ENCODE measurements at regions of chr3 and their contacts with region 1.

Region 1: GRCh38 chr3:129934234-129935123 is 40.0 kb upstream of the TRH start:
- DNase-seq: no peak
- ATAC-seq: peak; percentile 18 to 49
- H3K4me3 ChIP-seq: peak overlapping the region; percentile 11 to 53 (median 23)
- H3K27ac ChIP-seq: no peak overlapping the region
- H3K4me1 ChIP-seq: peaks cover 0 to 3% of the 10 kb centered on the region in 2 donors
- H3K27me3 ChIP-seq: no peaks in the 10 kb centered on the region
- CTCF ChIP-seq: peak; percentile 70 to 91 (median 87)
- POLR2A ChIP-seq: no peak

Region 2: GRCh38 chr3:129383292-129383860 is 551.1 kb before region 1 on chr3:
- in situ Hi-C with region 1: no loop called
- intact Hi-C with region 1: loop called (anchors 5 kb)
- DNase-seq: peak in 1 of 2 donors; percentile 32
- ATAC-seq: peak; percentile 64 to 81
- H3K4me3 ChIP-seq: no peak overlapping the region
- H3K27ac ChIP-seq: no peak overlapping the region
- H3K4me1 ChIP-seq: peaks cover 4 to 10% of the 10 kb centered on the region in 2 donors
- H3K27me3 ChIP-seq: no peaks in the 10 kb centered on the region
- CTCF ChIP-seq: peak; percentile 41 to 77 (median 63)
- POLR2A ChIP-seq: no peak

Region 3: GRCh38 chr3:129490242-129491045 is 444.0 kb before region 1 on chr3:
- in situ Hi-C with region 1: loop called (anchors 5 to 25 kb)
- intact Hi-C with region 1: loop called (anchors 2 kb)
- DNase-seq: peak; percentile 84 to 86
- ATAC-seq: peak; percentile 64 to 75
- H3K4me3 ChIP-seq: no peak overlapping the region
- H3K27ac ChIP-seq: peak overlapping the region; percentile 71 to 84 (median 78)
- H3K4me1 ChIP-seq: peaks cover 39 to 47% of the 10 kb centered on the region in 2 donors
- H3K27me3 ChIP-seq: no peaks in the 10 kb centered on the region
- CTCF ChIP-seq: peak; percentile 81 to 91 (median 88)
- POLR2A ChIP-seq: no peak

Region 4: DNA sequence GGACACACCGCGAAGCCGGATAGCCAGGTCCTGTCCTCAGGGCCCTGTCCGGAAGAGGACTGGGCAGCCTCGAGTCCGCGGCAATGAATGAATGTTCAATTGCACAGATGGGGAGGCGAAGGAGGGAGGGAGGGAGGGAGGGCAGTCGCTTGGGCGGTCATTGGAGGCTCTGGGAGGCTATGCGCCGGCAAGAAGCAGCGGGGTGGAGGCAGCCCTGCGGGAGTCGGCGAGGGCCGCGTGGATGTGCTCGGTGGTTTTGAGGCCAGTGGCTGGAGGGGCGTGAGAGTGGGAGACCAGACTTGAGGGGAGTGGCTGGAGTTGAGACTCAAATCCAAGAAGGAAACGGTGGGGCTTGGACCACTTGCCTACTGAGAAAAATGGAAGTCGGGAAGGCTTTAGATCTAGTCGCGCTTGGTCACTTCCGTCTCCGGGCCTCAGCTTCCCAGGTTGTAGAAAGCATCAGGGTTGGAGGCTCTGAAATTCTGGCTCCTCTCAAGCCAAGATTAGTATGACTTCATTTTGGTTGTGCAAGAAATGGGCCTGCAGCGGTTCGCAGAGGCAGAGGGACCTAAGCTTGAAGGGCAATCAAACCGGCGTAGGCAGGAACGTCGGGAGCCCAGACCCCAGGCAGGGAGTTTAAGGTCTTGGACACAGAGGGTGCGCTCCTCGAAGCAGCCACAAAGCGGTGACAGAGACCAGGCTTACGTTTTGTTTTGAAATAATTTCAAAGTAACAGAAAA is 306.9 kb before region 1 on chr3:
- in situ Hi-C with region 1: loop called in 2 of 4 experiments (anchors 10 kb)
- intact Hi-C with region 1: loop called (anchors 1 kb)
- DNase-seq: peak; percentile 49 to 71
- ATAC-seq: peak; percentile 57 to 61
- H3K4me3 ChIP-seq: peak overlapping the region; percentile 77 to 97 (median 88)
- H3K27ac ChIP-seq: peak overlapping the region; percentile 95 to 99 (median 97)
- H3K4me1 ChIP-seq: peaks cover 39 to 41% of the 10 kb centered on the region in 2 donors
- H3K27me3 ChIP-seq: no peaks in the 10 kb centered on the region
- CTCF ChIP-seq: peak; percentile 77 to 87 (median 83)
- POLR2A ChIP-seq: no peak

Region 5: DNA sequence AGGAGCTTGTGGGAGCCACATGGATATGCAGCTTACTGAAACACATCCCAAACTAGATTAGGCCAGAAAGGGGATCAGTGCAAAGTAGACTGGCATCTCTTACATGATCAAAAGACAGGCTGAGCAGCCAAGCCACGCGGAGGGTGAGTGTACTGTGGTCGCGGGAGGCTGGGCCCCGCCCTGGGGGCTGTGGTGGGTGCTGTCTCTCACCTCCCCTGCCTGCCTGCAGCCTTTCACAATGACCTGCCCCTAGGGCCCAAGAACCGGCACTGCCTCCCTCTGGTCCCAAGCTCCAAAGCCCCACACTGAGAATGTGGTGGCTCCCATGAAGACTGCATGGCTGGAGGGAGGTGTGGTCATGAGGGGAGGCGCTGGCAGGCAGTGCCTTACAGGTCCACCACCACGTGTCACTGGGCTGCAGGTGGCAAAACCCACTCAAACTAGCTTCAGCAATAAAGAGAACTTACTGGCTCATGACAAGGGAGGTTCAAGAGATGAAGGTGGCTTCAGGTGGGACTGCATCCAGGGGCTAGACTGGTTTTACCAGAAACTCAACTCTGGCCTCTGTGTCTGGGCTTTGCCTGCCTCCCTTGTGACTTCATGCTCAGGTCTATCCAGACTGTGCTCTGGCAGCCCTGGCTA is 300.6 kb before region 1 on chr3:
- in situ Hi-C with region 1: loop called in 2 of 4 experiments (anchors 10 kb)
- intact Hi-C with region 1: no loop called
- DNase-seq: no peak
- ATAC-seq: no peak
- H3K4me3 ChIP-seq: no peak overlapping the region
- H3K27ac ChIP-seq: no peak overlapping the region
- H3K4me1 ChIP-seq: no peaks in the 10 kb centered on the region
- H3K27me3 ChIP-seq: no peaks in the 10 kb centered on the region
- CTCF ChIP-seq: no peak
- POLR2A ChIP-seq: no peak

Region 6: DNA sequence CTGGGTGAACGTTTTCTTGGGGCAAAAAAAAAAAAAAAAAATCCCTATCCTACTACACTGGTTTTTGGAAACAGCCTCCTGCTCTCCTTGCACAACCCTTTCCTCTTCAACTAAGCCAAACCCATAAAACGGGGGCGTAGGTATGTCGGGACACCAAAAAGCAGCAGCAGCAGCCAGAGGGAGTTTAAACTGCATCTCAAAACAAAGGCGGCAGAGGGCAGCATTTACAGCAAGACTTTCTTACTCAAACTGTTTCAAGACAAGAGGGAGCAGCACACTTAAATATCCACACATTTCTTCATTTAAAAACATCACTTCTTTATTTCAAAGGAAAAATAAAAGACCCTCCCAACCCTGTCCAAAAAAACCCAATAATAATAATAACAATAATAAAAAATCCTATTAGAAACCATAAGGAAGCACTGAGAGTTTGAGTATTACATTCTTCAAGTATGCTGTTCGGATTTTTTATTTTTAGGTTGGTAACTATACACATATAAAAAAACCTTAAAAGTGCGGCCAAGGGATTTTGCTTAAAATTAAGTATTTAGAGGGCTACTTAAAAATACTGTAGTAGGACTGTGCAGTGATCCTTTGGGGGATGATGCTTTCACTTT is 284.1 kb before region 1 on chr3:
- in situ Hi-C with region 1: loop called in 3 of 4 experiments (anchors 10 kb)
- intact Hi-C with region 1: loop called (anchors 5 kb)
- DNase-seq: peak; percentile 35 to 71
- ATAC-seq: peak; percentile 46 to 70
- H3K4me3 ChIP-seq: no peak overlapping the region
- H3K27ac ChIP-seq: peak overlapping the region in 1 of 4 donors; percentile 9
- H3K4me1 ChIP-seq: peaks cover 26 to 35% of the 10 kb centered on the region in 2 donors
- H3K27me3 ChIP-seq: no peaks in the 10 kb centered on the region
- CTCF ChIP-seq: peak; percentile 51 to 81 (median 71)
- POLR2A ChIP-seq: no peak

Region 7: DNA sequence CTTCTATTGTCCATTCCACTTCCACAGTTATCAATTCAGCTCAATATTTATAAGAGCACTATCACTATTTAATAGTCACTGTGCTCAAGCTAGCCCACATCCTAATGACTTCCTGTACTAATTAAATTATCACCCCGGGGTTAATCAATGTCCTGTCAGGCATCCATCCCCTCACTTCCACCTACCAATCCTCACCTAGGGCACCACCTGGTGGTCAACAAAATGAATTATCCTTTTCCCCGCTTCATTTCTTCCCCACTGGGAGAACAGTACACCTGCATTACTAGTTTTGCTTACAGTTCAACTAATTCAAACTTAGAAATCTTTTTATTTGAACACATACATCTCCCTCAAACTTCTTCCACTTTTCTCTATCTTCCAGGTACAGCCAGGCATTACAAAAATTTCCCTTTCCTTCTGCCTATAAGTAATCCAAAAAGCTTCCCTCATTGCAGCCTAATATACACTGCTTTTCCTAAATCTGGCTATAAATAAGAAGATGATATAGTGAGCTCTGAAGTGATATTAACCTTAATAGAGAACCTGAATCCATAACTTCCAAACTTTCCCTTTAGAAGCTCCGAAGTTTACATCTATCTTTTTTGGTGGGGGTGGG is 109.4 kb before region 1 on chr3:
- in situ Hi-C with region 1: no loop called
- intact Hi-C with region 1: loop called (anchors 2 kb)
- DNase-seq: peak in 1 of 2 donors; percentile 20
- ATAC-seq: peak in 1 of 2 donors; percentile 41
- H3K4me3 ChIP-seq: no peak overlapping the region
- H3K27ac ChIP-seq: no peak overlapping the region
- H3K4me1 ChIP-seq: peaks cover 0 to 7% of the 10 kb centered on the region in 2 donors
- H3K27me3 ChIP-seq: no peaks in the 10 kb centered on the region
- CTCF ChIP-seq: peak; percentile 65 to 81 (median 76)
- POLR2A ChIP-seq: no peak

Region 8: GRCh38 chr3:129867506-129868124 is 66.9 kb before region 1 on chr3:
- in situ Hi-C with region 1: no loop called
- intact Hi-C with region 1: no loop called
- DNase-seq: no peak
- ATAC-seq: peak; percentile 74 to 87
- H3K4me3 ChIP-seq: no peak overlapping the region
- H3K27ac ChIP-seq: peak overlapping the region; percentile 47 to 75 (median 63)
- H3K4me1 ChIP-seq: peaks cover 28 to 29% of the 10 kb centered on the region in 2 donors
- H3K27me3 ChIP-seq: no peaks in the 10 kb centered on the region
- CTCF ChIP-seq: no peak
- POLR2A ChIP-seq: no peak

Region 9: DNA sequence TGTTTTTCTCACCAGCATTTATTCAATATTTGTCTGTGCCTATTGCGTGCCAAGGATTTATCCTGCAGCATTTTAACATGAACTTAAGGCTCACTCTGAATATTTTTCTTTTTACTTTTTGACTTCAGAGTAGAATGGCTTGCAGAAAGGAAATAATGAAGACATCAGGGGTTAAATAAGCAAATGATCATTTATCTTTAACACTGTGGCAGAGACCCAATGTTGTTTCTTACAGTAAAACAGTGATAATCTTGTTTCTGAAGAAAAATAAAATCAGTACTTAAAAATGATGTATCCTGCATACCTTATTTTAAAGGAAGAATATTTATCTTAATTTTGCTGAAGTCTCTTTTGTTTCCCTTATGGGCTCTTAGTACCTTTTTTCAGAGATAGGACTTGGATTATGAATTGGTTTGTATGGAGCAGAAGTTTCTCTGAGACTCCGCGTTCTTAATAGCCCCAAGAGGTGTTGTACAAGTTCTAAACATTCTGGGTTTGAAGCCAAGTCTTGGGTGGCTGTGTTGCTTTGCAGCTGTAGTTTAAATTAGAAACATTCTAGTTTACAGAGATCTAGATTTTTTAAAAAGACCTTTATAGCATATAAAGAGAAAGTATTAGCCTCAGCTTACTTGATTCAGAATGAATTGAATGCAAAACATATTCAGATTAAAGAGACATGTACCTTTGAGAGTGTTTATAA is 623.0 kb after region 1 on chr3:
- in situ Hi-C with region 1: no loop called
- intact Hi-C with region 1: no loop called
- DNase-seq: no peak
- ATAC-seq: no peak
- H3K4me3 ChIP-seq: no peak overlapping the region
- H3K27ac ChIP-seq: no peak overlapping the region
- H3K4me1 ChIP-seq: no peaks in the 10 kb centered on the region
- H3K27me3 ChIP-seq: no peaks in the 10 kb centered on the region
- CTCF ChIP-seq: no peak
- POLR2A ChIP-seq: no peak